Colonic mucosa (tissue), 4 donors: ENCODE measurements at regions of chr4 and their contacts with region 1.

Region 1: GRCh38 chr4:7192252-7193029 is at the start of gene SORCS2:
- DNase-seq: peak; percentile 36
- H3K4me3 ChIP-seq: peak within 1 kb of the TSS; percentile 19
- H3K27ac ChIP-seq: no peak within 1 kb of the TSS
- H3K4me1 ChIP-seq: no peaks in the 10 kb centered on the region
- H3K27me3 ChIP-seq: peaks cover 13% of the 10 kb centered on the region
- CTCF ChIP-seq: no peak
- total RNA-seq, gene SORCS2: 0.54 to 0.74 TPM

Region 2: GRCh38 chr4:7295911-7296660 is 103.6 kb after region 1 on chr4:
- intact Hi-C with region 1: loop called (anchors 2 kb)
- DNase-seq: peak; percentile 25
- H3K4me3 ChIP-seq: no peak overlapping the region
- H3K27ac ChIP-seq: no peak overlapping the region
- H3K4me1 ChIP-seq: no peaks in the 10 kb centered on the region
- H3K27me3 ChIP-seq: no peaks in the 10 kb centered on the region
- CTCF ChIP-seq: no peak

Region 3: DNA sequence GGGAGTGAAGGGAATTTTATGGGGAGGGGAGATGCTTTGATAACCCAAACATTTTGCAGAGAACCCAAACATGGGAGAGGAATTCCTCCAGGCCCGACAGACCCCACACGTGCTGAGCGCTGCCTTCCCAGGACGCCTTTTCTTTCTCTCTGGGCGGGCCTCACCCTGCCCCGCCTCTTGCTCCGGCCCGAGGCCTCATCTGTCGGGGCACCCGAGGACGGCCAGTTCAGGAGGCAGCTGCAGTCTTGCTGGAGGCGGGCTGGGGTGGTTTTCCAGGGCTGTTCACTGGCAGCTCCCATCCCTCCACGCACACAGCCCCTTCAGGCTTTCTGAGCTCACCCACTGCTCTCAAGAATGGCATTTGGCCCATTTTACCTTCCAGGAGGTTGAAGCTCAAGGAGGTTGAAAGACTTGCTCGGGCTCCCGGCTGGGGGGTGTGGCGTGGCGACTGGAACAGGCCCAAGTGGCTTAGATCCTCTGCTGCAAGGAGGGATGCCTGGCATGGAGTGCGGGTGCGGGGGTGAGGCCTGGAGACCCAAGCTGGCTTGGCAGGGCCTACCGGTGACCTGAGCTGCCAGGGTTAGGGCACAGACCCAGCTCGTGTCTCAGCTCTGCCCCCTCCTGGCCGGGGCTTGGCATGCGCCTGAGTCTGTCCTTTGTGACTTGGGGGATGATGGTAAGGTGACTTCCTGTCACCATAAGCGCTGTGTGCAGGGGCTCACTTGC is 143.1 kb after region 1 on chr4:
- intact Hi-C with region 1: no loop called
- DNase-seq: peak; percentile 55
- H3K4me3 ChIP-seq: no peak overlapping the region
- H3K27ac ChIP-seq: no peak overlapping the region
- H3K4me1 ChIP-seq: no peaks in the 10 kb centered on the region
- H3K27me3 ChIP-seq: no peaks in the 10 kb centered on the region
- CTCF ChIP-seq: peak; percentile 23

Region 4: GRCh38 chr4:7392438-7393421 is 200.3 kb after region 1 on chr4:
- intact Hi-C with region 1: no loop called
- DNase-seq: no peak
- H3K4me3 ChIP-seq: no peak overlapping the region
- H3K27ac ChIP-seq: no peak overlapping the region
- H3K4me1 ChIP-seq: no peaks in the 10 kb centered on the region
- H3K27me3 ChIP-seq: no peaks in the 10 kb centered on the region
- CTCF ChIP-seq: no peak

Region 5: GRCh38 chr4:7462509-7462971 is 270.1 kb after region 1 on chr4:
- intact Hi-C with region 1: loop called (anchors 10 kb)
- DNase-seq: no peak
- H3K4me3 ChIP-seq: no peak overlapping the region
- H3K27ac ChIP-seq: no peak overlapping the region
- H3K4me1 ChIP-seq: no peaks in the 10 kb centered on the region
- H3K27me3 ChIP-seq: no peaks in the 10 kb centered on the region
- CTCF ChIP-seq: no peak

Region 6: GRCh38 chr4:7719354-7720174 is 527.1 kb after region 1 on chr4:
- intact Hi-C with region 1: loop called (anchors 2 kb)
- DNase-seq: peak; percentile 56
- H3K4me3 ChIP-seq: no peak overlapping the region
- H3K27ac ChIP-seq: no peak overlapping the region
- H3K4me1 ChIP-seq: no peaks in the 10 kb centered on the region
- H3K27me3 ChIP-seq: no peaks in the 10 kb centered on the region
- CTCF ChIP-seq: peak; percentile 72